Naive thymus-derived CD4-positive, alpha-beta T cell (primary cell): ENCODE measurements at regions of chr11 and their contacts with region 1.

Region 1: GRCh38 chr11:118145285-118146227 is 7.1 kb downstream of the SCN4B start:
- DNase-seq: peak; percentile 76 to 93 (median 81)
- ATAC-seq: peak; percentile 95
- H3K4me3 ChIP-seq: peak overlapping the region; percentile 66
- H3K4me3 Mint-ChIP-seq: peak overlapping the region; percentile 43 to 88 (median 83)
- H3K27ac ChIP-seq: no peak overlapping the region
- H3K27ac Mint-ChIP-seq: peak overlapping the region in 1 of 9 donors; percentile 35
- H3K4me1 ChIP-seq: no peaks in the 10 kb centered on the region
- H3K4me1 Mint-ChIP-seq: peaks cover 0 to 20% (median 5%) of the 10 kb centered on the region in 7 donors
- H3K27me3 ChIP-seq: peaks cover 0 to 5% of the 10 kb centered on the region in 2 donors
- H3K27me3 Mint-ChIP-seq: peaks cover 45 to 78% (median 56%) of the 10 kb centered on the region in 5 donors

Region 2: DNA sequence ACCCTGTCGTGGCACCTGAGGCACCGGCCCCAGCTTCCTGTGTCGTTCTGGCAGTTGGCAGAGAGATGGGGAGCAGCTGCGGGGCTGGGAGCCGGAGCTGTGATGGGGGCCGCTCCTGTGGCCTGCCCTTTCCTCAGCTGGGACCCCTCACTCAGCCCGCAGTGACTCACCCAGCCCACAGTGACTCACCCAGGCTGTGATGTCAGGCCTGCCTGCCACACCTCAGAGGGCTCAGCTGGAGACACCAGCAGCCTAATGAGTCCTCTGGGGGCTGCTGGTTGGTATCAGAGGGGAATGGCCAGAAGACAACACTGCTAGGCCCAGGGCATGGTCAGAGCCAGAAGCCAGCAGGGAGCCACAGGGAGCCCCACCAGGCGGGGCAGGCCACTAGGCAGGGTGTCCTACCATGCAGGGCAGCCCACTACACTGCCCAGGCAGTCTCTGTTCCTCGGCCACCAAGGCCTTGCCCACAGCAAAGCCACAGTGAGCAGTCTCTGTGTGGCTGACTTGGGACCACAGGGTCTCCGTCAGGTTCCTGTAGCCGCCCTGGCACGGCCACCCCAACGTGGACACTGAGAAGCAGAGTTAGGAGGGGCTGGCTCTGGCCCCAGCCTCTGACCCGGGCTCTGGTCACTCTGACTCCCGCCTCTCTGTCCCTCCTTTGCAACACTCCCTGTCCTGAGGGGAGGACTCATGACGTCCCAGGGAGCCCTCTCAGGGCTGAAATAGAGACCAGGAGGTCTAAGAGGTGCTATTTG is 316.8 kb before region 1 on chr11:
- CTCF ChIA-PET with region 1: no interaction called
- POLR2A ChIA-PET with region 1: no interaction called
- intact Hi-C with region 1: no loop called
- DNase-seq: peak in 6 of 9 donors; percentile 19 to 82 (median 24)
- ATAC-seq: peak; percentile 88
- H3K4me3 ChIP-seq: no peak overlapping the region
- H3K4me3 Mint-ChIP-seq: peak overlapping the region in 7 of 10 donors; percentile 16 to 79 (median 48)
- H3K27ac ChIP-seq: peak overlapping the region; percentile 35
- H3K27ac Mint-ChIP-seq: peak overlapping the region in 6 of 9 donors; percentile 16 to 87 (median 60)
- H3K4me1 ChIP-seq: peaks cover 38 to 47% of the 10 kb centered on the region in 2 donors
- H3K4me1 Mint-ChIP-seq: peaks cover 48 to 72% (median 50%) of the 10 kb centered on the region in 7 donors
- H3K27me3 ChIP-seq: no peaks in the 10 kb centered on the region
- H3K27me3 Mint-ChIP-seq: peaks cover 0 to 2% (median 0%) of the 10 kb centered on the region in 5 donors

Region 3: DNA sequence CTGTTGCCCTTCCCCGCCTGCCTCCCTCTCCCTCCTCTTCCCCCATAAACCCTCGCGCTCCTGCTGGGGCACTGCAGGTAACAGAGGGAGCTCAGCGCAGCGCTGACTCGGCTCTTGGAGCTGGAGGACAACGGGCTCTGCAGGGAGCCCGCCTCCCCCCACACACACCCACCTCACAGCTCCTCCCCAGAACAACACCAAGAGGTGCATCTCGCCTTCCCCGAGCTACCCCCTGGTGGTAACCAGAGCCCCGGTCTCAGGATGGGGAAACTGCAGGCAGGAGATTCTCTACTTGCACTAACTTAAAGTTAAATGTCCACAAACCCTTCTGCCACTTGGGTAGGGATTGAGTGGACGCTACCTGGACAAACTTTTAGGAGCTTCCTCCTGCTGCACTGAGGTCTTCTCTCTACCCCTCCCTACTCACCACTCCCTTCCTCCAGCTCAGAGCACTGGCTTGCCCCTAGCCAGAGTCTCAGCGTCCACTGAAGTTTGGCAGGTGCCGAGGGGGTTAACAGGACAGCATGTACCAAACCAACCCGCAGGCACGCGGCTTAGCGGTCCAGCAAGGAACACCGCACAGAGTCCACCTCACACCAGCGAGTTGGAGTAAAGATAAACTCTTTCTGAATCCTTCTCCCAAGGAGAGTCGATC is 11.1 kb after region 1 on chr11:
- CTCF ChIA-PET with region 1: interaction called, 13 read pairs
- POLR2A ChIA-PET with region 1: no interaction called
- intact Hi-C with region 1: no loop called
- DNase-seq: peak in 1 of 9 donors; percentile 28
- ATAC-seq: peak; percentile 69
- H3K4me3 ChIP-seq: no peak overlapping the region
- H3K4me3 Mint-ChIP-seq: no peak overlapping the region
- H3K27ac ChIP-seq: no peak overlapping the region
- H3K27ac Mint-ChIP-seq: no peak overlapping the region
- H3K4me1 ChIP-seq: peaks cover 0 to 3% of the 10 kb centered on the region in 2 donors
- H3K4me1 Mint-ChIP-seq: peaks cover 6 to 18% (median 12%) of the 10 kb centered on the region in 7 donors
- H3K27me3 ChIP-seq: peaks cover 6 to 11% of the 10 kb centered on the region in 2 donors
- H3K27me3 Mint-ChIP-seq: peaks cover 54 to 82% (median 62%) of the 10 kb centered on the region in 5 donors

Region 4: DNA sequence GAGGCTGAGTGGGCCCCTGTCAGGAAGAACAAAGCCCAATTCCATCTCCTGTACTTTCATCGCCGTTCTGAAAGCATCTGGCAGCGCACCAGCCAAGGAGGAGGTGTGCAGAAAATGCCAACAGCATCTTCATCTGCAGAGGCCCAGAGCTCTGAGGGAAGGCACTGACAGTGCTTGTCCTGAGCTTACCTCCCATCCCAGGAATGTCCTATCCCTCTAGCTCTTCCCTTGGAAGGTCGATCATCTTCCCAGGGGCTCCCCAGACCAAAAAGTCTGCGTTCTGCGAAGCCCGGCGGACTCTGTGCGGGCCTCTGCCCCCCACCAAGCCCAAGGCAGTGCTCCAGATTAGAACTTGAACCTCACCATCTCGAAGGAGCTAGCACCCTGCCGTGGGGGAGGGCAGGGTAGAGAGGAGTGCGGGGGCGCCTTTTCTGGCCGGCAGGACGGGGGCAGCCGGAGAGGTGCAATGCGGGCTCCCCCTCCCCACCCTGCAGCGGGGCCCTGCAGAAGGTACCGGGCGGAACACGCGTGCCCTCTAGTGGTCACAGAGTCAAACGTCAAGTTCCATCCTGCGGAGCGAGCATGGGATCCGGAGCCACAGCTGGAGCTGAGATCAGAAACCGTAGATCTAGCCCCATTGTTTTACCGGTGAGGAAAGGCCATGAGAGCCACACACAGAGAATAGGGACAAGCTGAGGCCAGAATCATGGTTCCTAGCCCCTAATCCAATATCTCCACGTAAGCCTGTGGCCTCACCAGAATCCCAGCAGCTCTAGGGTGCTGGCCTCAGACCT is 25.9 kb after region 1 on chr11:
- CTCF ChIA-PET with region 1: interaction called, 14 read pairs
- POLR2A ChIA-PET with region 1: no interaction called
- intact Hi-C with region 1: loop called (anchors 1 kb)
- DNase-seq: peak; percentile 40 to 77 (median 64)
- ATAC-seq: peak; percentile 93
- H3K4me3 ChIP-seq: no peak overlapping the region
- H3K4me3 Mint-ChIP-seq: peak overlapping the region in 1 of 10 donors; percentile 37
- H3K27ac ChIP-seq: no peak overlapping the region
- H3K27ac Mint-ChIP-seq: no peak overlapping the region
- H3K4me1 ChIP-seq: peaks cover 0 to 5% of the 10 kb centered on the region in 2 donors
- H3K4me1 Mint-ChIP-seq: peaks cover 0 to 9% (median 2%) of the 10 kb centered on the region in 7 donors
- H3K27me3 ChIP-seq: no peaks in the 10 kb centered on the region
- H3K27me3 Mint-ChIP-seq: peaks cover 0 to 35% (median 6%) of the 10 kb centered on the region in 5 donors

Region 5: GRCh38 chr11:118290923-118291322 is 145.4 kb after region 1 on chr11:
- CTCF ChIA-PET with region 1: interaction called, 4 read pairs
- POLR2A ChIA-PET with region 1: no interaction called
- intact Hi-C with region 1: loop called (anchors 1 kb)
- DNase-seq: peak in 8 of 9 donors; percentile 22 to 63 (median 46)
- ATAC-seq: peak; percentile 81
- H3K4me3 ChIP-seq: no peak overlapping the region
- H3K4me3 Mint-ChIP-seq: peak overlapping the region in 2 of 10 donors; percentile 30 to 33
- H3K27ac ChIP-seq: no peak overlapping the region
- H3K27ac Mint-ChIP-seq: peak overlapping the region in 1 of 9 donors; percentile 68
- H3K4me1 ChIP-seq: peaks cover 0 to 11% of the 10 kb centered on the region in 2 donors
- H3K4me1 Mint-ChIP-seq: peaks cover 13 to 19% (median 15%) of the 10 kb centered on the region in 7 donors
- H3K27me3 ChIP-seq: no peaks in the 10 kb centered on the region
- H3K27me3 Mint-ChIP-seq: no peaks in the 10 kb centered on the region

Region 6: GRCh38 chr11:118488480-118489109 is 343.0 kb after region 1 on chr11:
- CTCF ChIA-PET with region 1: interaction called, 3 read pairs
- POLR2A ChIA-PET with region 1: no interaction called
- intact Hi-C with region 1: loop called (anchors 1 kb)
- DNase-seq: peak; percentile 66 to 86 (median 80)
- ATAC-seq: peak; percentile 89
- H3K4me3 ChIP-seq: no peak overlapping the region
- H3K4me3 Mint-ChIP-seq: no peak overlapping the region
- H3K27ac ChIP-seq: peak overlapping the region; percentile 53
- H3K27ac Mint-ChIP-seq: peak overlapping the region in 7 of 9 donors; percentile 10 to 89 (median 57)
- H3K4me1 ChIP-seq: no peaks in the 10 kb centered on the region
- H3K4me1 Mint-ChIP-seq: peaks cover 0 to 12% (median 5%) of the 10 kb centered on the region in 7 donors
- H3K27me3 ChIP-seq: no peaks in the 10 kb centered on the region
- H3K27me3 Mint-ChIP-seq: no peaks in the 10 kb centered on the region

Region 7: DNA sequence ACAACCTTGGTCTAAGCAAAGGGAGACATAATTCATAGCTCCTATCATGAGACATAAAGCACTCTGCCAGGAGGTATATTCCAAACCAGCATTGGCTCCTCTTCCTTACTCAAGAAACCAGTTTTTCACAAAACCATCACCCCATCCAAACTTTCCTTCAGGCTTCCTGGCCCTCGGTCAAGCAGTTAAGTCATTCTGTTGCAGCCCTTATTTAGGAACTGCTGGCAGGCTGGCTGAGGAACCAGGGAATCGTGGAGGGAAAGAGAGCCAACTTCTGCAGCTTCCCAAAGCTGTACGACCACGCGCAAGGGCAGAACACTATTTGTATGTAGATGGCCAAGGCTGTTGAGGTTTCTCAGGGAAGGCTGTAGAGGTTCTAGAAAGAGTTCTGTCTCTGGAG is 419.5 kb after region 1 on chr11:
- CTCF ChIA-PET with region 1: no interaction called
- POLR2A ChIA-PET with region 1: no interaction called
- intact Hi-C with region 1: loop called in 1 of 2 experiments (anchors 1 kb)
- DNase-seq: no peak
- ATAC-seq: no peak
- H3K4me3 ChIP-seq: no peak overlapping the region
- H3K4me3 Mint-ChIP-seq: peak overlapping the region; percentile 26 to 96 (median 80)
- H3K27ac ChIP-seq: peak overlapping the region; percentile 48
- H3K27ac Mint-ChIP-seq: peak overlapping the region; percentile 54 to 97 (median 88)
- H3K4me1 ChIP-seq: no peaks in the 10 kb centered on the region
- H3K4me1 Mint-ChIP-seq: peaks cover 9 to 29% (median 20%) of the 10 kb centered on the region in 7 donors
- H3K27me3 ChIP-seq: no peaks in the 10 kb centered on the region
- H3K27me3 Mint-ChIP-seq: no peaks in the 10 kb centered on the region

Region 8: DNA sequence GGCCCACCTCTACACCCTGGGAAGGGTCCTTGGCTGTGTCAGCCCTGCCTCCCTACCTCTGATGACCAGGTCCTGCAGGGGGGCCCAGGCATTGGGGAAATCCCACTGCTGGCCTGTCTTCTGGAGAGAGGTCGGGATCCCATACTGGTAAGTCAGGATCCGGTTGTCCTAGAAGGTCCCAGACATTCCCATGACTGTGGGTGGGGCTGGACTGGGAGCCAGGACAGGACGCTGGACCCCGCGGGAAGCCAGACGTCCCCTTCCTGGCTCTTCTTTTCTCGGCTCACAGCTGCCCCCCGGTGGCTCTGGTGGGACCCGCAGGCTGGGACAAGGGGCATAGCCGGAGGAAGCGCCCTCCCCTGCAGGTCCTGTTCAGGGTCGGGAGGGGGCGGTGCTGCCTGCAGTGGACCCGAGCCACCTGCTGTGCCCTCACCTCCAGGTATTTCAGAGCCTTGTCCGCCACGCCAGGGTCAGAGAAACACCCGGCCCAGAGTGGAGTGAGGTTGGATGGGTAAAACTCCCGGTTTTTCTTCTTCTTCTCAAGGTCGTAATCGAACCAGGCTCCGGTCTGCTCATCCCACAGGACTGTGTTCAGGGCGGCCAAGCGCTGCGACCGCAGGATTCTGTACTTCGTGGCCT is 513.9 kb after region 1 on chr11:
- CTCF ChIA-PET with region 1: no interaction called
- POLR2A ChIA-PET with region 1: no interaction called
- intact Hi-C with region 1: loop called in 1 of 2 experiments (anchors 1 kb)
- DNase-seq: peak; percentile 75 to 88 (median 84)
- ATAC-seq: peak; percentile 99
- H3K4me3 ChIP-seq: no peak overlapping the region
- H3K4me3 Mint-ChIP-seq: peak overlapping the region in 2 of 10 donors; percentile 56 to 64
- H3K27ac ChIP-seq: no peak overlapping the region
- H3K27ac Mint-ChIP-seq: peak overlapping the region in 1 of 9 donors; percentile 1
- H3K4me1 ChIP-seq: peaks cover 0 to 7% of the 10 kb centered on the region in 2 donors
- H3K4me1 Mint-ChIP-seq: peaks cover 0 to 12% (median 6%) of the 10 kb centered on the region in 7 donors
- H3K27me3 ChIP-seq: no peaks in the 10 kb centered on the region
- H3K27me3 Mint-ChIP-seq: no peaks in the 10 kb centered on the region